Astrocyte of the cerebellum (primary cell): ENCODE measurements at regions of chr12 and their contacts with region 1.

Region 1: DNA sequence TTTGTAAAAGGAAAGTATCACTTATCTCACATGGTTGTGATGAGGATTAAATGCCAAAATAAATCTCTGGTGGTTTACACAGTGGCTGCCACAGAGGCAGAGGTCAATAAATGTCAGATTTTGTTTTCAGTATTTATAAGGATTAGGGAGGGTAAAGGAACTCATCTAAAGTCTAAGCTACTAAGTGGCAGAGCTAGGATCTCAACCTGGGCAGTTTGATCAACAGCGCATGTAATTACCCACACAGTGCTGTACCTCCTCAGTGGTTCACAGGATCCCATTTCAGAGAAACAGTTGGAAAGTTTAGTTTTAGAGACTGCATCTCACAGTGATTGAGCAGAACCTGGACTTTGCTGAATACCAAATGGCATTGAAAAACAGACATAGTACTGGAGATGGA is 44.9 kb upstream of the RIC8B start:
- DNase-seq: no peak
- H3K4me3 ChIP-seq: no peak overlapping the region
- CTCF ChIP-seq: no peak

Region 2: DNA sequence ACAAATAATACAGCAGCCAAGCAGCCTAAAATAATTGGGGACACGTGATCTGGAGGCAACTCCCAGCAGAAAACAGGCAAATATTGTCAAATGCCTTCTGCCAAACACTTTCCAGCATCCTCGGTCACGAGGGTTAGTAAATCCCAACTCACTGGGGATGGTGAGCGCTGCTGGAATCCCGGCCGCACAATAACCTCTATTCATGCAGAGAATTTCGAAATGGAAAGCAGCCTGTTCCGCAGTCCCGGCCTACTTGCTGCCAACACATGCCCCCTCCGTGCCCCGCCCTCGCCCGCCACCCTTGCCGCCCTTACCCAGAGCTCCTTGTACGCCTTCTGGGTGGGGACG is 84.6 kb before region 1 on chr12:
- in situ Hi-C with region 1: loop called (anchors 5 kb)
- DNase-seq: peak; percentile 53
- H3K4me3 ChIP-seq: no peak overlapping the region
- CTCF ChIP-seq: no peak